ENCODE measurements at regions of chr10 and their contacts with region 1.

Region 1: GRCh38 chr10:125316449-125316848 is 156.1 kb upstream of the CTBP2 start:
- DNase-seq: no peak
- H3K4me3 ChIP-seq: no peak overlapping the region
- H3K27ac ChIP-seq: no peak overlapping the region
- H3K4me1 ChIP-seq: no peaks in the 10 kb centered on the region
- H3K27me3 ChIP-seq: no peaks in the 10 kb centered on the region
- CTCF ChIP-seq: no peak
- EP300 ChIP-seq: no peak
- POLR2A ChIP-seq: no peak

Region 2: DNA sequence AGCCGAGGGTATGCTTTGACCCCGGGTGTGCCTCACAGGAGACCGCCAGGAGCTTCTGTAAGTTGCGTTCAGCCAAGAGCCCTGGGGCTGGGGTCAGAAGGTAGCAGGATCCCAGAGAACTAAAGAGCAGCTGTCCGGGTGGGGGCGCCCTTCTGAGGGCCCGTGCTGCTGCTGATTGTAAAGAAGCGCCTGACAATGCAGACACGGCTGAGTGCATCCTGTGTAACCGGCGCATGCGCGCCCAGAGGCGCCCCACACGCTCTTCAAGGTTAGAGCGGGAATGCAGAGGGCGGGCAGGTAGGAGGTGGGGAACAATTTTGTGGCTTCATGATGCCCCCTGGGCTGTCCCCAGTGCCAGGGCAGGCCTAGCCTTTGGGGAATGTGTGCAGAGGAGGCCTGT is 54.1 kb after region 1 on chr10:
- in situ Hi-C with region 1: no loop called
- intact Hi-C with region 1: loop called (anchors 2 kb)
- DNase-seq: no peak
- H3K4me3 ChIP-seq: no peak overlapping the region
- H3K27ac ChIP-seq: no peak overlapping the region
- H3K4me1 ChIP-seq: no peaks in the 10 kb centered on the region
- H3K27me3 ChIP-seq: no peaks in the 10 kb centered on the region
- CTCF ChIP-seq: no peak
- EP300 ChIP-seq: no peak
- POLR2A ChIP-seq: no peak

Measured in transverse colon (tissue), 4 donors.